ENCODE measurements at regions of chr1 and their contacts with region 1.

Region 1: GRCh38 chr1:993379-993995 is 6.4 kb downstream of the HES4 start:
- DNase-seq: no peak
- H3K4me3 ChIP-seq: no peak overlapping the region
- H3K4me1 ChIP-seq: peaks cover 5% of the 10 kb centered on the region; the same call in 1 of the 2 replicates
- H3K27me3 ChIP-seq: peaks cover 8% of the 10 kb centered on the region; the same call in 1 of the 2 replicates

Region 2: DNA sequence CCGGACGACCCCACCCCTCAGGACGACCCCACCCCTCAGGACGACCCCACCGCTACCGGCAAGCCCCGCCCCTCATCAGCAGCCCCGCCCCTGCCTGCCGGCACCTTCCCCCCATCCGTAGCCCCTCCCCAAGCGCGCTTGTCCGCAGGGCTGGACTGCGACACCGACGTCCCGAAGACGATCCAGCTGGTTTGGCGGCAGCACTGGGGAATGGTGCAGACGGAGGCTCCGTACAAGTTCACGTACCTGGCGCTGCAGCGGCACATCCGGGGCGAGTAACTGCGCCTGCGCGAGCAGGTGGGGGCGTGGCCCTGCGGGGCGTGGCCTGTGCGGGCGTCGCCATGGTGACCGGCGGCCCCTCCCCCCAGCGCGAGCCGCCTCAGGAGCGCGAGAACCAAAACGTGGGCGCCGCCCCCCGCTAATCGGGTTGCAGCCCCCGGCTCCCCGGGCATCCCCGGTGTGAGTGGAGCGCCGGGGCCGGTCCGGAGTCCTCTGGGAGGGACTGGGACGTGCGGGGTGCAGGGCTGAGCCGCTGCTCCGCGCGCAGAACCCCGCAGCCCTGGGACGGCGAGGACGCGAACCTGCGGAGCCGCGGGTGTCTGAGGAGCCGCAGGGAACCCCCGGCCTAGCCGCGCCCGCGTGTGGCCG is 75.7 kb after region 1 on chr1:
- in situ Hi-C with region 1: loop called (anchors 5 kb)
- DNase-seq: peak; percentile 71 to 92
- H3K4me3 ChIP-seq: peak overlapping the region; percentile 47
- H3K4me1 ChIP-seq: peaks cover 4% of the 10 kb centered on the region; the same call in 1 of the 2 replicates
- H3K27me3 ChIP-seq: peaks cover 4% of the 10 kb centered on the region; the same call in 1 of the 2 replicates

Measured in HAP-1 (cell line).